ENCODE measurements at regions of chr18 and their contacts with region 1.

Region 1: DNA sequence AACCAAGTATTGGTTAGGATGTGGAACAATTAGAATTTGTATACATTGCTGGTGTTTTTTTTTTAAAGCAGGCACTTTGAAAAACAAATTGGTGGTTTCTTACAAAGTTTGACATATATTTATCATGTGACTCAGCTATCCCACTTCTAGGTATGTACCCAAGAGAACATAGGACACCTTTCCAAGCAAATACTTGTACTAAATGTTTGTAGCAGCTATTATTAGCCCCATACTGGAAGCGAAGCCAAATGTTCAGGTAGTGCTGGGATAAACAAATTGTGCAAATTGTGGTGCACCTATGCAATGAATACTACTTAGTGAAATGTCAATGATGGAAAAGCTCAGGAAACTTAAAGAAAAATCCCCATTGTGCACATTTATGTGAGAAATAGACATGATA is 101.0 kb downstream of the MIB1 start:
- DNase-seq: no peak
- ATAC-seq: no peak
- H3K4me3 ChIP-seq: no peak overlapping the region
- H3K4me3 Mint-ChIP-seq: no peak overlapping the region
- H3K27ac ChIP-seq: no peak overlapping the region
- H3K27ac Mint-ChIP-seq: no peak overlapping the region
- H3K4me1 ChIP-seq: no peaks in the 10 kb centered on the region
- H3K4me1 Mint-ChIP-seq: no peaks in the 10 kb centered on the region
- H3K27me3 ChIP-seq: no peaks in the 10 kb centered on the region
- H3K27me3 Mint-ChIP-seq: no peaks in the 10 kb centered on the region

Region 2: GRCh38 chr18:21575656-21576055 is 265.9 kb before region 1 on chr18:
- CTCF ChIA-PET with region 1: no interaction called
- POLR2A ChIA-PET with region 1: interaction called in 1 of 2 experiments, 10 read pairs
- DNase-seq: no peak
- ATAC-seq: no peak
- H3K4me3 ChIP-seq: no peak overlapping the region
- H3K4me3 Mint-ChIP-seq: no peak overlapping the region
- H3K27ac ChIP-seq: no peak overlapping the region
- H3K27ac Mint-ChIP-seq: no peak overlapping the region
- H3K4me1 ChIP-seq: no peaks in the 10 kb centered on the region
- H3K4me1 Mint-ChIP-seq: peaks cover 8 to 13% (median 9%) of the 10 kb centered on the region in 3 donors
- H3K27me3 ChIP-seq: no peaks in the 10 kb centered on the region
- H3K27me3 Mint-ChIP-seq: no peaks in the 10 kb centered on the region

Region 3: GRCh38 chr18:21997207-21998143 is 155.9 kb after region 1 on chr18:
- CTCF ChIA-PET with region 1: no interaction called
- POLR2A ChIA-PET with region 1: no interaction called
- DNase-seq: peak in 4 of 35 experiments; percentile 0 to 50 (median 4)
- ATAC-seq: peak in 2 of 4 experiments; percentile 28 to 41
- H3K4me3 ChIP-seq: no peak overlapping the region
- H3K4me3 Mint-ChIP-seq: no peak overlapping the region
- H3K27ac ChIP-seq: no peak overlapping the region
- H3K27ac Mint-ChIP-seq: no peak overlapping the region
- H3K4me1 ChIP-seq: no peaks in the 10 kb centered on the region
- H3K4me1 Mint-ChIP-seq: peaks cover 4 to 7% (median 7%) of the 10 kb centered on the region in 3 donors
- H3K27me3 ChIP-seq: peaks cover 0 to 8% of the 10 kb centered on the region in 2 experiments
- H3K27me3 Mint-ChIP-seq: peaks cover 4 to 9% of the 10 kb centered on the region in 2 donors

Region 4: GRCh38 chr18:22052405-22053105 is 211.0 kb after region 1 on chr18:
- CTCF ChIA-PET with region 1: no interaction called
- POLR2A ChIA-PET with region 1: no interaction called
- DNase-seq: no peak
- ATAC-seq: no peak
- H3K4me3 ChIP-seq: no peak overlapping the region
- H3K4me3 Mint-ChIP-seq: no peak overlapping the region
- H3K27ac ChIP-seq: no peak overlapping the region
- H3K27ac Mint-ChIP-seq: no peak overlapping the region
- H3K4me1 ChIP-seq: no peaks in the 10 kb centered on the region
- H3K4me1 Mint-ChIP-seq: no peaks in the 10 kb centered on the region
- H3K27me3 ChIP-seq: peaks cover 0 to 2% of the 10 kb centered on the region in 2 experiments
- H3K27me3 Mint-ChIP-seq: peaks cover 0 to 3% of the 10 kb centered on the region in 2 donors

Measured in T-cell (primary cell).